Aorta (tissue), 5 donors: ENCODE measurements at regions of chr2 and their contacts with region 1.

Region 1: DNA sequence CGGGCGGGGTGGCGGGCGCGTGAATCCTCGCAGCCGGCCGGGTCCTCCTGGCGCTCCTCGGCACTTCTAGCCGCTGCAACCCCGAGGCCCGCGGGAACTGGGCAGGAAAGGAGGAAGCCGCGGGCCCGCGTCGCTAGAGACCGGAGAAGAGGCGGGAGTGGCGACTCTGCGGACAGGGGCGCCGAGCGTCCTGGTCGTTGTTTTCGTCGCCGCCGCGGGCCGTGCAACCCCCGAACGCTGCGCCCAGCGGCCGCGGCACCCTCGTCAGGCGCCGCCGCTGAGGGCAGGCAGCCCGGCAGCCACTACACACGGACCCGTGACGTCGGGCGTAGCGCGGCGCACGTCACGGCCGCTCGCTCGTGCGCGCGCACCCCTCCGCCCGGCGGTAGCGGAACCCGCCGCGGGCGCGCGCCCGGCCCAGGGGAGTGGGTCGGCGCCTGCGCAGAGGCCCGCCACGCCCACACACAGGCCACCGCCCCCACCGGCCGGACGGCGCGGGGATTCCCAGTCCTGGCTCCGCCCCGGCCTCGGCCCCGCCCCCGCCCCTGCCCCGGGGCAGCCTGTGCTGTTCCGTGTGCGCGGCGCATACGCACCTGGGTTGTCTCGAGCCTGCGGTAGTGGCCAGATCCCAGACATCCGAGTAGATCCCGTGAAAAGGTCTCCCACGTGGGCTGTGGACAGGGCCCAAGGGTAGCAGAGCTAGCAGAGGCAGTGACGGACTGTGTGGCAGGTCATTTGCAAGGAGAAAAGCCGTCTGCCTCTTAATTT is at the start of gene MAP3K2:
- DNase-seq: peak; percentile 95 to 97
- ATAC-seq: peak; percentile 97
- H3K4me3 ChIP-seq: peak within 1 kb of the TSS; percentile 76 to 93
- H3K27ac ChIP-seq: peak within 1 kb of the TSS; percentile 77 to 100
- H3K4me1 ChIP-seq: peaks cover 3 to 5% of the 10 kb centered on the region in 2 donors
- H3K27me3 ChIP-seq: no peaks in the 10 kb centered on the region
- total RNA-seq, gene MAP3K2: 67.6 to 79.3 TPM

Region 2: GRCh38 chr2:127407661-127408003 is 19.8 kb after region 1 on chr2:
- intact Hi-C with region 1: loop called in 1 of 2 experiments (anchors 2 kb)
- DNase-seq: no peak
- ATAC-seq: peak; percentile 60
- H3K4me3 ChIP-seq: no peak overlapping the region
- H3K27ac ChIP-seq: peak overlapping the region in 1 of 2 donors; percentile 73
- H3K4me1 ChIP-seq: peaks cover 0 to 2% of the 10 kb centered on the region in 2 donors
- H3K27me3 ChIP-seq: no peaks in the 10 kb centered on the region